CD8-positive, alpha-beta memory T cell (primary cell): ENCODE measurements at regions of chr2 and their contacts with region 1.

Region 1: GRCh38 chr2:113602869-113603466 is 24.1 kb upstream of the RABL2A start:
- DNase-seq: no peak
- H3K4me3 ChIP-seq: peak overlapping the region; percentile 59
- H3K4me3 Mint-ChIP-seq: peak overlapping the region; percentile 87 to 96 (median 91)
- H3K27ac ChIP-seq: peak overlapping the region; percentile 57
- H3K27ac Mint-ChIP-seq: peak overlapping the region; percentile 84 to 98 (median 94)
- H3K4me1 ChIP-seq: no peaks in the 10 kb centered on the region
- H3K4me1 Mint-ChIP-seq: peaks cover 4 to 10% (median 9%) of the 10 kb centered on the region in 3 donors
- H3K27me3 ChIP-seq: no peaks in the 10 kb centered on the region
- H3K27me3 Mint-ChIP-seq: peaks cover 0 to 4% of the 10 kb centered on the region in 2 donors

Region 2: GRCh38 chr2:113700186-113700841 is 97.3 kb after region 1 on chr2:
- CTCF ChIA-PET with region 1: interaction called, 25 read pairs
- POLR2A ChIA-PET with region 1: interaction called, 3 read pairs
- DNase-seq: peak; percentile 12 to 73 (median 28)
- H3K4me3 ChIP-seq: no peak overlapping the region
- H3K4me3 Mint-ChIP-seq: peak overlapping the region; percentile 65 to 88 (median 78)
- H3K27ac ChIP-seq: no peak overlapping the region
- H3K27ac Mint-ChIP-seq: peak overlapping the region in 7 of 8 donors; percentile 32 to 82 (median 56)
- H3K4me1 ChIP-seq: peaks cover 18% of the 10 kb centered on the region
- H3K4me1 Mint-ChIP-seq: peaks cover 16 to 24% (median 19%) of the 10 kb centered on the region in 3 donors
- H3K27me3 ChIP-seq: no peaks in the 10 kb centered on the region
- H3K27me3 Mint-ChIP-seq: no peaks in the 10 kb centered on the region